Activated CD8-positive, alpha-beta T cell treated with anti-CD3 and anti-CD28 coated beads, Interleukin-2, amount 10 ng/mL, durations not matched to agents 7 days and 5 days (primary cell): ENCODE measurements at regions of chr17 and their contacts with region 1.

Region 1: GRCh38 chr17:42248351-42249179 is 27.6 kb downstream of the STAT5B start:
- DNase-seq: peak; percentile 88
- ATAC-seq: peak; percentile 93
- H3K4me3 Mint-ChIP-seq: peak overlapping the region; percentile 78
- H3K27ac Mint-ChIP-seq: peak overlapping the region; percentile 90
- H3K4me1 Mint-ChIP-seq: peaks cover 65% of the 10 kb centered on the region
- H3K27me3 Mint-ChIP-seq: no peaks in the 10 kb centered on the region

Region 2: DNA sequence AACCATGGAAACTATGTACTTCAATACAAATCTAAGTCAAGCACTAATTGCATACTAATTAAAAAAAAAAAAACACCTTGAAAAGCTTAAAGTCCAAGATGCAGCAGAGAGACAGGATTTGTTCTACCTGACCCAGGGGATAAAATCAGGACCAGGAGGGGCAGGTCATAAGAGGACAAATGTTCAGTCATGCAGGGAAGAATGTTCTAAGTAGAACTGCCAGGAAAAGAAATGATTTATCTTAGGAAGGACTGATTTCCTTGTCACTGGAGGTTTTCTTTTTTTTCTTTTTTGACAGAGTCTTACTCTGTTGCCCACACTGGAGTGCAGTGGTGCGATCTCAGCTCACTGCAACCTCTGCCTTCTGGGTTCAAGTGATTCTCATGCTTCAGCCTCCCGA is 45.2 kb before region 1 on chr17:
- CTCF ChIA-PET with region 1: no interaction called
- POLR2A ChIA-PET with region 1: no interaction called
- DNase-seq: no peak
- ATAC-seq: no peak
- H3K4me3 Mint-ChIP-seq: no peak overlapping the region
- H3K27ac Mint-ChIP-seq: peak overlapping the region; percentile 20
- H3K4me1 Mint-ChIP-seq: no peaks in the 10 kb centered on the region
- H3K27me3 Mint-ChIP-seq: no peaks in the 10 kb centered on the region

Region 3: GRCh38 chr17:42266918-42267778 is 18.6 kb after region 1 on chr17:
- CTCF ChIA-PET with region 1: interaction called, 24 read pairs
- POLR2A ChIA-PET with region 1: interaction called, 128 read pairs
- DNase-seq: peak; percentile 55
- ATAC-seq: peak; percentile 81
- H3K4me3 Mint-ChIP-seq: no peak overlapping the region
- H3K27ac Mint-ChIP-seq: peak overlapping the region; percentile 73
- H3K4me1 Mint-ChIP-seq: peaks cover 54% of the 10 kb centered on the region
- H3K27me3 Mint-ChIP-seq: no peaks in the 10 kb centered on the region

Region 4: GRCh38 chr17:42276359-42276608 is 27.7 kb after region 1 on chr17 and contains the start of gene STAT5B:
- CTCF ChIA-PET with region 1: interaction called, 7 read pairs
- POLR2A ChIA-PET with region 1: interaction called, 128 read pairs
- DNase-seq: peak; percentile 74
- ATAC-seq: peak; percentile 69
- H3K4me3 Mint-ChIP-seq: peak within 1 kb of the TSS; percentile 93
- H3K27ac Mint-ChIP-seq: peak within 1 kb of the TSS; percentile 86
- H3K4me1 Mint-ChIP-seq: peaks cover 46% of the 10 kb centered on the region
- H3K27me3 Mint-ChIP-seq: no peaks in the 10 kb centered on the region
- total RNA-seq, gene STAT5B: 92.7 to 94.4 TPM